Colonic mucosa (tissue), 4 donors: ENCODE measurements at regions of chr16 and their contacts with region 1.

Region 1: GRCh38 chr16:12819126-12820117 is 15.7 kb upstream of the CPPED1 start:
- DNase-seq: peak; percentile 71
- H3K4me3 ChIP-seq: no peak overlapping the region
- H3K27ac ChIP-seq: no peak overlapping the region
- H3K4me1 ChIP-seq: no peaks in the 10 kb centered on the region
- H3K27me3 ChIP-seq: no peaks in the 10 kb centered on the region
- CTCF ChIP-seq: peak; percentile 84

Region 2: GRCh38 chr16:12455287-12455798 is 364.1 kb before region 1 on chr16:
- intact Hi-C with region 1: loop called (anchors 2 kb)
- DNase-seq: peak; percentile 45
- H3K4me3 ChIP-seq: no peak overlapping the region
- H3K27ac ChIP-seq: no peak overlapping the region
- H3K4me1 ChIP-seq: no peaks in the 10 kb centered on the region
- H3K27me3 ChIP-seq: no peaks in the 10 kb centered on the region
- CTCF ChIP-seq: peak; percentile 93

Region 3: DNA sequence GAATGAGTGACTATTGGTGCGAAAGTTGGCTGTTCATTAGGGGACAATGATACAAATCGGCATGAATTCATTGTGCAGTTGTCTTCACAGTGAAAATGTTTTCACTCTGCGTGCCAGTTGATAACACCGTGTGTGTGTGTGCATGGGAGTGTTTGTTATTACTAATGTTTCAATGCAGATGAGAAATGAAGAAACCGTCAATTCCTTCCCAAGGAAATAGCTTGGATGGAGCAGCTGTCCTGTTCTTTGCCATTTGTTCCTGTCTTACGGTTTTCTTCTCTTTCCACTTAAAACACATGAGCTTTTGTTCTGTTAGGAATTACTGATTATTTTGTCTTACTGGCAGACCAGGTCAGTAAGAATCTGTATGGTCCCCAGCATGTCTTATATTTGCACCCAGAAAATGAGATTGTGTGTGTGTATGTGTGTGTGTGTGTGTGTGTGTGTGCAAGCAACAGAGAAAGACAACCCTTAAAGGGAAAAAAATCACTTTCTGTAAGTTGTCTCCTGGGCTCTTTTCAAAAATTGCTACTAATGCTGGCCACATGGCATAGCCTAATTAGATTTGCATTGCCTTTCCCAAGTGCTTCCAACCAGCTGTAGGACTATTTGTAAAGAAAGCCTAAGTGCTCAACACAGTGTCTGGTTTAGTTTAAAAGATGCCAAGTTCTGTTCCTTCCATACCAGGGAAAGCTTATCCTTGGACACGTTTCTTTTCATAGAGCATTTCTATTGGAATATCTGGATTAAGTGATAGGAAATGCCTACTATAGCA is 105.8 kb after region 1 on chr16:
- intact Hi-C with region 1: no loop called
- DNase-seq: no peak
- H3K4me3 ChIP-seq: no peak overlapping the region
- H3K27ac ChIP-seq: no peak overlapping the region
- H3K4me1 ChIP-seq: no peaks in the 10 kb centered on the region
- H3K27me3 ChIP-seq: no peaks in the 10 kb centered on the region
- CTCF ChIP-seq: no peak